OCI-LY7 (cell line): ENCODE measurements at regions of chr2 and their contacts with region 1.

Region 1: DNA sequence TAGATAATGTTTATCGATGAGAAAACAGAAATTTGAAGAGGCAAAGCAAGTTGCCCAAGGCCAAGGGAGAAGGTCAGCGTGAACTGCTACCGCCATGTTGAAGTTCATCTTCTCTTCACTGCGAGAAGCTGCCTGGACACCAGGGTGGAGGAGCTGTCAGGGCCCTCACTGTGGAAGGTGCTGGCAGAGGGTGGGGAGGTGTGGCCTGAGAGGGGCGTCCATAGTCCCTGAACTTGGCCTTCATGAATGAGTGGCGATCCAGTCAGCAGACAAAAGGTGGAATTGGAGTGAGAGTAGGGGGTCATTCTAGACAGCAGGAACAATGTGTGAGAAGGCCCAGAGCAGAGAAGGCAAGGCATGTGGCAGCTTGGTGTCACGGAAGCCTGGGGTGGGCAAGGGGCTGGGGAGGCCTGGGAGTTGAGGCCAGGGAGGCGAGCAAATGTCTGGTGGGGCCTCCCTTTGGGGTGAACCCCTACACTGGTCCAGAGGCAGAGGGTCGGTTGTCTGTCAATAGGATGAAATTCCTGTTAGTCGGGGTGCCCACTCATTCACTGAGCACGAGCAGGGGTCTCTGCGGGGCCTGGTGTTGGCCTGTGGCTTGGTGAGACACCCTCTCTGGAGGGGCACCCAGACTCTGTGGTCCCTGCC is 33.3 kb upstream of the KCNF1 start:
- DNase-seq: no peak
- H3K4me3 ChIP-seq: no peak overlapping the region
- H3K27ac ChIP-seq: no peak overlapping the region
- H3K4me1 ChIP-seq: no peaks in the 10 kb centered on the region
- CTCF ChIP-seq: no peak

Region 2: DNA sequence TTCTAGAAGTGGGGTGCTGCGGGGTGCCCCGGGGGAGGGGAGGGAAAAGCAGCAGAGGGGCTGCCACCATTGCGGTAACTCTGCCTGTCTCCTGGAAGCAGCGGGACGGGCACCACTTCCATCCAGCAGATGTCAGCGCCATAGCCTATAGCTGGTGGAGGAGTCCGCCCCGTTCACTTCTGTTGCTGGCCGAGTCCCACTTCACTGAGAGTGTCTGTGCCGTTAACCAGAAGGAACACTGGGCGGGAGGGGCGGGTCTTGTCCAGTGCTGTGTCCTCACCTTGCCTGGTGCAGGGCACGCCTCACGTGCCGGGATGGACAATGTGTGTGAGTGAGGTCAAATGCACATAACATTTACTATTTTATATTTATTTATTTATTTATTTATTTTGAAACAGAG is 411.0 kb before region 1 on chr2:
- CTCF ChIA-PET with region 1: no interaction called
- POLR2A ChIA-PET with region 1: no interaction called
- intact Hi-C with region 1: no loop called
- DNase-seq: no peak
- H3K4me3 ChIP-seq: no peak overlapping the region
- H3K27ac ChIP-seq: no peak overlapping the region
- H3K4me1 ChIP-seq: no peaks in the 10 kb centered on the region
- CTCF ChIP-seq: no peak

Region 3: GRCh38 chr2:10717613-10718012 is 160.8 kb before region 1 on chr2:
- CTCF ChIA-PET with region 1: no interaction called
- POLR2A ChIA-PET with region 1: no interaction called
- intact Hi-C with region 1: no loop called
- DNase-seq: no peak
- H3K4me3 ChIP-seq: no peak overlapping the region
- H3K27ac ChIP-seq: no peak overlapping the region
- H3K4me1 ChIP-seq: peaks cover 10% of the 10 kb centered on the region
- CTCF ChIP-seq: no peak

Region 4: GRCh38 chr2:11019614-11020013 is 141.2 kb after region 1 on chr2:
- CTCF ChIA-PET with region 1: interaction called, 14 read pairs
- POLR2A ChIA-PET with region 1: no interaction called
- intact Hi-C with region 1: no loop called
- DNase-seq: no peak
- H3K4me3 ChIP-seq: no peak overlapping the region
- H3K27ac ChIP-seq: no peak overlapping the region
- H3K4me1 ChIP-seq: no peaks in the 10 kb centered on the region
- CTCF ChIP-seq: no peak